Panc1 (cell line): ENCODE measurements at regions of chr15 and their contacts with region 1.

Region 1: GRCh38 chr15:60883691-60884640 is 345.1 kb downstream of the RORA start:
- DNase-seq: no peak
- ATAC-seq: no peak
- H3K4me3 ChIP-seq: no peak overlapping the region
- H3K27ac ChIP-seq: no peak overlapping the region
- H3K4me1 ChIP-seq: no peaks in the 10 kb centered on the region
- H3K27me3 ChIP-seq: 0 out of 2 replicates have a peak, but pooled peaks cover 2% of the 10 kb centered on the region
- CTCF ChIP-seq: no peak

Region 2: DNA sequence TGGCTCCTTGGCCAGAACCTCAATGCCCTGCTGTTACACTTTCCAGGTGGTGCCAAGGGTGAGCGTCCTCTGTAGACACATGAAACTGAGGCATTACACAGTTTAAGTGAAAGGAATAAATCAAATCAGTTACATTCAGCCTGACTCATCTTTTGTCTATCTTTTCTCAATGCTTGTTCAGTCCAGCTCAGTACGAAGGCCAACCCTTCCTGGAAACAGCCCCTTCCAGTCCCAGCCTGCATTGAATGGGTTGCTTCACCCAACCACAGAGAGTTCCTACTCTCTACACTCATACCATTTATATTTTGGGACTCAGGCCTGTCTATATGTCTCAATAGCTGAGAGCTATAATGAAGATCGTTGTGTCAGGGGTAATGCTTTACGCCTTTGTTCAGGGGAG is 18.5 kb before region 1 on chr15:
- CTCF ChIA-PET with region 1: interaction called, 16 read pairs
- POLR2A ChIA-PET with region 1: no interaction called
- in situ Hi-C with region 1: no loop called
- intact Hi-C with region 1: no loop called
- DNase-seq: no peak
- ATAC-seq: no peak
- H3K4me3 ChIP-seq: no peak overlapping the region
- H3K27ac ChIP-seq: no peak overlapping the region
- H3K4me1 ChIP-seq: no peaks in the 10 kb centered on the region
- H3K27me3 ChIP-seq: no peaks in the 10 kb centered on the region
- CTCF ChIP-seq: no peak